ENCODE measurements at regions of chr9 and their contacts with region 1.

Region 1: DNA sequence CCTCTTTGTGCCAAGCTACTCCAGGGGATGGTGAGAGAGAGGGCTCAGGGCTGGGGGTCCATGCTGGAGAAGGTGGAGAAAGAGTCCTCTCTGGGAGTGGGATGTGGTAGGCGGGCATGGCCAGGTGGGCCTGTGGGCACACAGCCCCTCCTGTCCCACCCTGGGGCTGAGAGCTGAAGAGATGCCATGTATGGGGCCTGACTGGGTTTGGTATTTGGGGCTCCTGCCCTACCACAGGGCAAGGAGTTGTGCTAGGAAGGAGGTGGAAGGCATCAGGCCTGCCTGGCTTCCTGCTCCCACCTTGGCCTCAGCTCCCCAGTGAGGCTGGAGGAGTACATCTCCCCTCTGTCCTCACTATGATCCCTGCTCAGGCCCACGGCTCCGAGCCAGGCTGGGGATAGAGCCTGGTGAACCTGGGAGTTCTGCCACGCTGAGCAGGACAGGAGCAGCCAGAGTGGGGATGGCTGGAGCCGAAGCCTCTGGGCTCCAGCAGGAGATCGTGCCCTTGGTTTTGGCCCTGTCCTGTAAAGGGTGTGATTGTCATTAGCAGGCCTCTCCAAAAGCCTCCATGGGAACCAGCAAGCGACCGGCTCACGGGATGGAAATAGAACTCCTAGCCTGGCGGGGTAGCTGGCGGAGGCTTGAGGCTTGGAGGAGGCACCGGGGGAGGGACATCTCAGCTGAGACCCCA is 75.5 kb downstream of the CACNA1B start:
- DNase-seq: no peak
- H3K4me3 ChIP-seq: no peak overlapping the region
- H3K27ac ChIP-seq: no peak overlapping the region
- H3K4me1 ChIP-seq: no peaks in the 10 kb centered on the region
- H3K27me3 ChIP-seq: no peaks in the 10 kb centered on the region
- CTCF ChIP-seq: no peak
- POLR2A ChIP-seq: no peak

Region 2: DNA sequence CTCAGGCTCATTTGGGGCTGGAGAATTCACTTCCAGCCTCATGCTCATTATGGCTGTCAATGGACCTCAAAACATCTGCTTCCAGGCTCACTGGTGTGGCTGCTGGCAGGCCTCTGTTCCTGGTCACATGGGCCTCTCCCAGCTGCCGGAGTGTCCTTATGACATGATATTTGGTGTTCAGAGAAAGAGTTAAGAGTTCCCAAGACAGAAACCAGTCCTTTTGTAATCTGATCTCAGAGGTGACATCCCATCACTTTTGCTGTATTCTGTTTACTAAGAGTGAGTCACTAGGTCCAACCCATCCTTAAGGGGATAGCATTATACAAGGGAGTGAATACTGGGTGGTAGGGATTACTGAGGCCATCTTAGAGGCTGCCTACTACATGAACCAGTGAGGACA is 29.1 kb after region 1 on chr9:
- intact Hi-C with region 1: loop called (anchors 1 kb)
- DNase-seq: no peak
- H3K4me3 ChIP-seq: no peak overlapping the region
- H3K27ac ChIP-seq: no peak overlapping the region
- H3K4me1 ChIP-seq: no peaks in the 10 kb centered on the region
- H3K27me3 ChIP-seq: no peaks in the 10 kb centered on the region
- CTCF ChIP-seq: no peak
- POLR2A ChIP-seq: no peak